Aorta (tissue), 5 donors: ENCODE measurements at regions of chr9 and their contacts with region 1.

Region 1: DNA sequence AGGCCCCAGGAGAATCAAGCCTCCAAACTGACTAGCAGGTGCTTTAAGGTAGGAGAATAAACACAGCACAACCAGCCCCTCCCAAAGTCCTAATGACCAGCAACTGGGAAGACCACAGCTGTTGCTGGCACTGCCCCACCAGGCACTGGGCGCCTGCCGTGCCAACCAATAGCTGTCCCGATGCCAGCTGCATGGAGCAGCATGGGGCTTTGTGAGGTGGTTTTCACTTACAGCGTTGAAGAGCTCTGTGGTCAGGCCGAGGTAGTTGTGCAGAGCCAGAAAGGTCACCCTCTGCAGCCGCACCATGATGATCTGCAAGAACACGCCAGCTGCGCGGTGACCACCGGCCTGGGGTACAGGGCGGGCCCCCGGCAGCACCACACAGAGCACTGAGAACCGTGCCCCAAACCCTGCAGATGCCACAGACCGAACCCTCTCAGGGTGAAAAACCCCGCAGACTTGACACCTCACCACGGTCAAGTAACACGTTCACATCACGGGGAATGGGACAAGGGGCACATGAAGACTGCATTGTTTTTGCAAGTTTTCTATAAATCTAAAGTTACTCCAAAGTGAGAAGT is 28.7 kb downstream of the PNPLA7 start:
- DNase-seq: no peak
- ATAC-seq: no peak
- H3K4me3 ChIP-seq: no peak overlapping the region
- H3K27ac ChIP-seq: no peak overlapping the region
- H3K4me1 ChIP-seq: no peaks in the 10 kb centered on the region
- H3K27me3 ChIP-seq: no peaks in the 10 kb centered on the region

Region 2: DNA sequence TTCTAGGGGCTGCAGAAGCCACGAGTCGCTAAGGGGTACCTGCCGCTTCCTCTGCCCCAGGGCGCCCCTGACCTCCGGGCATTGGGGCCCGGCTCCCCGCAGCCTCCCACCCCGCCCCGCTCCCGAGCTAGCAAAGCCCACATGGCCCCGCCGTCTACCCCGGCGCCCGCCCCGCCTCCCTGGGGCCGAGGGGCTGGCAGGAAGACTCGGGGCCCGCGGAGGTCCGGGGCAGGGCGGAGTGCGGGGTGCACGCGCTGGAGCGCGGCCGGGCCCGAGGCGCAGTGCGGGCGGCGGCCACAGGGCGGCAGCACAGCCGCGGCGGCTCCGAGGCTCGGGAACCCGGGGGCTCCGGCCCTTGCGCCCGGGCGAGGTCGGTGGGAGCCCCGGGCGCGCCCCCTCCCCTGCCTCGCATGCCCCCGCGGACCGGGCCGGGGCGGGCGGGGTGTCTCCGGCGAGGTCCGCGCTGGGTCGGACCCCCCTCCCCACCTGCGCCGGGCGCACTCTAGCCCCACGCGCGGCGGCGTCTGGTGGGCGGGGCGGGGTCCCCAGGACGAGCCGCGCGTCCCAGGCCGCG is 226.2 kb before region 1 on chr9:
- intact Hi-C with region 1: loop called in 1 of 2 experiments (anchors 2 kb)
- DNase-seq: no peak
- ATAC-seq: peak; percentile 49
- H3K4me3 ChIP-seq: no peak overlapping the region
- H3K27ac ChIP-seq: no peak overlapping the region
- H3K4me1 ChIP-seq: no peaks in the 10 kb centered on the region
- H3K27me3 ChIP-seq: no peaks in the 10 kb centered on the region

Region 3: DNA sequence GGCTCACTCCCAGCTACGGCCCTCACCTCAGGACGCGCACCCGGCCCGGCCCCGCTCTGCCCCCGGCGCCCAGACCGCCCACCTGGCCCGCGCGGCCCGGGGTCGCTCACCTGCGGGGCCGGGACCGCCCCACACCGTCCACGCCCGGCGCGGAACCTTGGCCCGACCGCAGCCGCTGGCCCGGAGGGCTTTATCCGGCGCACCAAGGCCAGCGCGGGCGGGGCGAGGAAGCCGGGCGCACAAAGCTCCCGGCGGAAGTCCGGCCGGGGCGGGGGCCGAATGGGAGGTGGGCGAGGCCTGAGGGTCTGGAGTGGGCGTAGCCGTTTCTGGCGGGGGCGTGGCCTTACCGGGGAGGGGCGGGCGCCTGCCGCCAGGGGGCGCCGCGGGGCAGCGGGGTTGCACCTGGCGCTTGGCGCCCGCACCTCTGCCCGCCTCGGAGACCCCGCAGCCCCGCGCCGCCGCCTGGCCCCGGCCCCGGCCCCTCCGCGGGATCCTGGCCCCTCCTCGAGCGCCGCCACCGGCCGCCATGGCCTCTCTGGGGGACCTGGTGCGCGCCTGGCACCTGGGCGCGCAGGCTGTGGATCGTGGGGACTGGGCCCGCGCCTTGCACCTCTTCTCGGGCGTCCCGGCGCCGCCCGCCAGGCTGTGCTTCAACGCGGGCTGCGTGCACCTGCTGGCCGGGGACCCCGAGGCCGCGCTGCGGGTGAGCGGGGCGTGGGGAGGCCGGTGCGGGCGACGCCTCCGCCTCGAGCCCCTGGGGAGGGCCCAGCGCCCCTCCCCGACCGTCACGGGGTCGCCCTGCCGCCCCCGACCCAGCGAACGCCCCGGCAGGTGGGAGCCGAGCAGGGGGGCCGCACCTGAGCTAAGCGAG is 98.3 kb before region 1 on chr9 and contains the starts of genes EXD3 and NOXA1:
- intact Hi-C with region 1: loop called in 1 of 2 experiments (anchors 10 kb)
- DNase-seq: peak; percentile 96 to 98
- ATAC-seq: peak; percentile 97
- H3K4me3 ChIP-seq: peak within 1 kb of the TSS; percentile 97
- H3K27ac ChIP-seq: peak within 1 kb of the TSS in 1 of 2 donors; percentile 28
- H3K4me1 ChIP-seq: no peaks in the 10 kb centered on the region
- H3K27me3 ChIP-seq: no peaks in the 10 kb centered on the region
- total RNA-seq, gene EXD3: 21.9 to 38.2 TPM
- total RNA-seq, gene NOXA1: 4.1 to 8.5 TPM

Region 4: GRCh38 chr9:137459147-137459600 is 62.3 kb before region 1 on chr9 and contains the start of gene NSMF:
- intact Hi-C with region 1: no loop called
- DNase-seq: peak; percentile 96 to 97
- ATAC-seq: peak; percentile 92
- H3K4me3 ChIP-seq: peak within 1 kb of the TSS; percentile 74 to 80
- H3K27ac ChIP-seq: peak within 1 kb of the TSS; percentile 60 to 73
- H3K4me1 ChIP-seq: peaks cover 0 to 4% of the 10 kb centered on the region in 2 donors
- H3K27me3 ChIP-seq: no peaks in the 10 kb centered on the region
- total RNA-seq, gene NSMF: 76.8 to 78.2 TPM

Region 5: DNA sequence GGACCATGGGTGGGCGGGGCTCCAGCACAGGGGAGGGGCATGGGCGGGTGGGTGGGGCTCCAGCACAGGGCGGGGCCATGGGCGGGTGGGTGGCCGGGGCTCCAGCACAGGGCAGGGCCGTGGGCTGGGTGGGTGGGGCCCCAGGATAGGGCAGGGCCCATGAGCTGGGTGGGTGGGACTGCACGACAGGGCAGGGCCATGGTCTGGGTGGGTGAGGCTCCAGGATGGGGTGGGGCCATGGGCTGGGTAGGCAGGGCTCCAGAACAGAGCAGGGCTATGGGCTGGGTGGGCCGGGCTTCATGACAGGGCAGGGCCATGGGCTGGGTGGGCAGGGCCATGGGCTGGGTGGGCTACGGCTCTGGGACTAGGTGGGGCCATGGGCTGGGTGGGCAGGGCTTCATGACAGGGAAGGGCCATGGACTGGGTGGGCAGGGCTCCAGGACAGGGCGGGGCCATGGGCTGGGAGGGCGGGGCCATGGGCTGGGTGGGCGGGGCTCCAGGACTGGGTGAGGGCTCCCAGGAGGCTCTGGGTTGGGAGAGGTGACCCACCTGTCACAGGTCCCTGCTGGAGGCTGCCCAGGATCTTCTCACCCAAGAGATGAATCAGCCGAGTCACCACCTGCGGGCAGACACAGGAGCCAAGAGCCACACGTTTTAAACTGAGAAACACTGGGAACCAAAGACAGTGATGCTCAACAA is 28.9 kb before region 1 on chr9:
- intact Hi-C with region 1: no loop called
- DNase-seq: no peak
- ATAC-seq: no peak
- H3K4me3 ChIP-seq: no peak overlapping the region
- H3K27ac ChIP-seq: no peak overlapping the region
- H3K4me1 ChIP-seq: no peaks in the 10 kb centered on the region
- H3K27me3 ChIP-seq: no peaks in the 10 kb centered on the region

Region 6: DNA sequence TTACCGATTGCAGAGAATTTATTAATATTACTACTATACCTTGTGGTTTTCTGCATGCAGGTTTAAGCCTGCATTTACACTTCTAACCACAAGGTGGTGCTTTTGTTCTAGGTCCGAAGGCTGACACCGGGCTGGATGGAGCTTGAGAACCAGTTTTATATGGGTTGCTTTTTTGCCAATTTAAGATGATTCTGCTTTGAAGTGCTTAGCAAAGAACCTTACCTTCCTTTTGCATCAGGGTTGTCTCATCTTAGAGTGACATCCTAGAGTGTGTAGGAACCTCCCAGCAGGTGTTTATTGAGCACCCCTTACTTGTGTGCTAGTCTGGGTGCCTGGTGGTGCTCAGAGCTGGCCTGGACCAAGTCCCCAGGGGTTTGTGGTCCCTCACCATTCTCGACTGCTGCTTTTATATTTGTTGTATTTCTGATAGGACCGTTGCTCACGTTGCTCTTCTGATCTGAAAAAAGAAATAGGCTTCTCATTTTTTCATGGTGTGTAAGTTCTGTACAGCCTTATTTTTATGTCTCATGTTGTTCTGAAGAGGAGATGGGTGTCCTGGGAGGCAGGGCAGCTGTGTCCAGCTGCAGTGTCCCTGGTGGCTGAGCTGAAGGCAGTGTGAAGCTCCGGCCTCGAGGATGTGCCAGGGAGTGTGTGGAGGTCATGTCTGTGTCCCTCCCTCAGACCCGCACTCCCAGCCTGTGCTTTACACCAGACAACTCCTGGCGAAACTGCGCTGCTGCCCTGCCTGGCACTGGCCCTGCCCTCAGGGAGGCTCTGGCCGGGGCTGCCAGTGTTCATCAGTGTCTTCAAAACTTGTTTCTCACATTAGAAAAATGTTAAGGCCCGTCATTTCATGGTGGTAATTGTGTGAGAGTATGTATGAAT is 151.7 kb after region 1 on chr9:
- intact Hi-C with region 1: no loop called
- DNase-seq: peak in 1 of 2 donors; percentile 63
- ATAC-seq: peak; percentile 82
- H3K4me3 ChIP-seq: no peak overlapping the region
- H3K27ac ChIP-seq: no peak overlapping the region
- H3K4me1 ChIP-seq: no peaks in the 10 kb centered on the region
- H3K27me3 ChIP-seq: no peaks in the 10 kb centered on the region